ENCODE measurements at regions of chr10 and their contacts with region 1.

Region 1: DNA sequence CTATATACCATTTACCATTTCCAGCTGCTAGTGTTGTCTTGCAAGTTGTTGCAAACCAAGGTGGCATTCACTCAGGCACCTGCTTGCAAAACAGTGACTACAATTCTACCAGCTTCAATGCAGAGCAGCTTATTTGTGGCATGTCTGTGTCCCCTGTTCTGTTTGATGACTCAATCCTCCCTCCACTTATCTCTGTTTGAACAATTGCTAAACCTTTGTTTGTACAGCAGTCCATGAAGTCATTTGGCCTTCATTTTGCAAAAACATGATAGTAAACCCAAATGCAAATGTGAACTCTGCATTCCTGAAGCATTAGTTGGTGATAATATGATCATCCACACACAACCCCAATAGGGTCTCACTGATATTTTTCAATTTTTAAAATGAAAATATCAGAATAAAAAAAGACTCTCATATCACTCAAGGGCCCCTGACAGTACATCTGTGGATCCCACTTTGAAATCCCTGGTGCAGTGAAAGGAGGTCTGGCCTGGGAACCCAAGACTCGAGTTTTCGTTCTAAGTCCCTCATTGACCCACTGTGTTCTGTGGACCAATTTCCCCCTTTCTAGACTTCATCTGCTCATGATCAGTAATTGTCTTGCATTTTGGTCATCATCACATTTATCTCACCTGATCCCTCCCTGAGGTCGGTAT is 425.4 kb downstream of the RPS24 start:
- DNase-seq: peak; percentile 98
- H3K4me3 ChIP-seq: no peak overlapping the region
- H3K27ac ChIP-seq: peak overlapping the region; percentile 99
- H3K4me1 ChIP-seq: peaks cover 43% of the 10 kb centered on the region
- H3K27me3 ChIP-seq: no peaks in the 10 kb centered on the region
- CTCF ChIP-seq: no peak
- POLR2A ChIP-seq: peak; percentile 87

Region 2: DNA sequence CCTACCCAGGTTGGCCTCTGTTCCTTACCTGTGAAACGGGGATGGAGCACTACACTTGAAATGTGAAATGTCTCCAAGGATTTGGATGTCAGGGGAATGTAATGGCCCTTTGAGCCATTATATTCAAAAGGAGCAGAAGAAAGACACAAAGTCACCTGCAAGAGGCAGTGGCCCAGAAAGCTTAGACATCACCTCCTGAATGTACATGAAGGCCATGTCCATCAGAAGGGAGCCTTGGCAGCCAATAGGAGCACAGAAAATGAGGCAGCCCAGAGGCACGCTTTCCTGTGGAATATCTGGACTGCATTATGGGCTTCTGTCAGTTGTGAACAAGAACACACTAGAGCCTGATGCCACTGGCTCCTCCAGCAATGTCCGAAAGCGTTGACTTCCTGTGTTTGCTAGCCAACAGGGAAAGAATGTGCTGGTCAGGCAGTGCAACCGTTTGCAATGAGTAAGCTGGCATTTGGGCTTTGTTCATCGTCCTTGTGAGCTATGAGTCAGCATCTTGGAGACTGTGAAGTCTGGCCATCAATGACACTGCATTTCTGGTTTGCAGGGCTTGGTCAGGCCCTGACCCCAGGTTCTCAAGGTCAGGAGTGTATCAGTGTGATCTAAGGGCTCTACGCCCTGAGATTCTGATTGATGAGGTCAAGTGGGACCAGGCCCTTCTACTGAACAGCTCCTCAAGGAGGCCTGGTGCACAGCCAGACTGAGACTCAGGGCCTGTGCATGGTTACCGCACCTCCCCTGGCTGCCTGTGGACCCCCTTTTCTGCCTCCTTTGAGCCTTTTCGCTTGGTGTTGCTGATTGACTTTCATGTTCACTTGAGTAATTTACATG is 203.1 kb before region 1 on chr10:
- CTCF ChIA-PET with region 1: no interaction called
- POLR2A ChIA-PET with region 1: no interaction called
- dilution Hi-C with region 1: no loop called
- intact Hi-C with region 1: loop called (anchors 1 kb)
- DNase-seq: peak; percentile 92
- H3K4me3 ChIP-seq: no peak overlapping the region
- H3K27ac ChIP-seq: peak overlapping the region; percentile 90
- H3K4me1 ChIP-seq: peaks cover 16% of the 10 kb centered on the region
- H3K27me3 ChIP-seq: no peaks in the 10 kb centered on the region
- CTCF ChIP-seq: no peak
- POLR2A ChIP-seq: no peak

Region 3: DNA sequence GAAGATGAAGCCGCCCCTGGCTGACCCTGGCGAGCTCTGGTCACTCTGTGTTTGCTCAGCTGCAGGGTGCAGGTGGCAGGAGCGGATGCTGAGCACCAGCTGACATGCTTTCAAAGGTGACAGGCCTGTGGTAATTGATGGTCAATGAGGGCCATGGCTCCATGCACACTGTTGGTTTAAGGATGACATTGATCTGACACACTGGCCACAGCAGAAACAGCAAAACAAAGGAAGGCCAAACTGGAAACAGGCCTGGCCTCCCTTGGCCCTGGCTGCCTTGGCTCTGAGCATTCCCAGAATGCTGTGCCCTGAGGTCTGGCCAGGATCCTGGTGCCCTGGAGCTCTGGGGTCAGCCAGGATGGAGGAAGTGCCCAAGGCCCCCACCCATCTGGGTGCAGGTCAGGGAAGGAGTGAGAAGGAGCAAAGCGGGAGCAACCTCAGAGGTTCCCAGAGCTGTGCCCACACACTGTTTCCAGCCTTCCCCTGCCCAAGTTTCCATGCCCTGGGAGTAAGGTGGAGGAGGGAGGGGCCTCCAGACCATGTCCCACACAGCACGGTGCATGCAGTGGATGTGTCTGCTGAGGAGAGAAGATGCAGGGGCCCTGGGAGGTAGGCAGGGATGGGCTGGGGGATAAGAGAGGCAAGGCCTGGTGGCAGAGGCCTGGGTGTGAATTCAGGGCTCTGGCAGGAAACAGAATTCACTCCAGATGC is 123.3 kb before region 1 on chr10:
- CTCF ChIA-PET with region 1: no interaction called
- POLR2A ChIA-PET with region 1: no interaction called
- dilution Hi-C with region 1: no loop called
- intact Hi-C with region 1: loop called (anchors 1 kb)
- DNase-seq: peak; percentile 87
- H3K4me3 ChIP-seq: no peak overlapping the region
- H3K27ac ChIP-seq: peak overlapping the region; percentile 73
- H3K4me1 ChIP-seq: peaks cover 20% of the 10 kb centered on the region
- H3K27me3 ChIP-seq: no peaks in the 10 kb centered on the region
- CTCF ChIP-seq: no peak
- POLR2A ChIP-seq: peak; percentile 71

Region 4: GRCh38 chr10:78552261-78552811 is 93.2 kb after region 1 on chr10:
- CTCF ChIA-PET with region 1: no interaction called
- POLR2A ChIA-PET with region 1: no interaction called
- dilution Hi-C with region 1: no loop called
- intact Hi-C with region 1: no loop called
- DNase-seq: no peak
- H3K4me3 ChIP-seq: no peak overlapping the region
- H3K27ac ChIP-seq: no peak overlapping the region
- H3K4me1 ChIP-seq: no peaks in the 10 kb centered on the region
- H3K27me3 ChIP-seq: peaks cover 9 to 17% of the 10 kb centered on the region in 2 experiments
- CTCF ChIP-seq: no peak
- POLR2A ChIP-seq: no peak

Region 5: GRCh38 chr10:78756604-78757349 is 297.7 kb after region 1 on chr10:
- CTCF ChIA-PET with region 1: no interaction called
- POLR2A ChIA-PET with region 1: no interaction called
- dilution Hi-C with region 1: no loop called
- intact Hi-C with region 1: loop called (anchors 2 kb)
- DNase-seq: peak; percentile 95
- H3K4me3 ChIP-seq: no peak overlapping the region
- H3K27ac ChIP-seq: peak overlapping the region; percentile 54
- H3K4me1 ChIP-seq: peaks cover 34% of the 10 kb centered on the region
- H3K27me3 ChIP-seq: peaks cover 0 to 6% of the 10 kb centered on the region in 2 experiments
- CTCF ChIP-seq: no peak
- POLR2A ChIP-seq: no peak